Activated CD4-positive, alpha-beta memory T cell treated with anti-CD3 and anti-CD28 coated beads for 36 hours (primary cell): ENCODE measurements at regions of chr17 and their contacts with region 1.

Region 1: DNA sequence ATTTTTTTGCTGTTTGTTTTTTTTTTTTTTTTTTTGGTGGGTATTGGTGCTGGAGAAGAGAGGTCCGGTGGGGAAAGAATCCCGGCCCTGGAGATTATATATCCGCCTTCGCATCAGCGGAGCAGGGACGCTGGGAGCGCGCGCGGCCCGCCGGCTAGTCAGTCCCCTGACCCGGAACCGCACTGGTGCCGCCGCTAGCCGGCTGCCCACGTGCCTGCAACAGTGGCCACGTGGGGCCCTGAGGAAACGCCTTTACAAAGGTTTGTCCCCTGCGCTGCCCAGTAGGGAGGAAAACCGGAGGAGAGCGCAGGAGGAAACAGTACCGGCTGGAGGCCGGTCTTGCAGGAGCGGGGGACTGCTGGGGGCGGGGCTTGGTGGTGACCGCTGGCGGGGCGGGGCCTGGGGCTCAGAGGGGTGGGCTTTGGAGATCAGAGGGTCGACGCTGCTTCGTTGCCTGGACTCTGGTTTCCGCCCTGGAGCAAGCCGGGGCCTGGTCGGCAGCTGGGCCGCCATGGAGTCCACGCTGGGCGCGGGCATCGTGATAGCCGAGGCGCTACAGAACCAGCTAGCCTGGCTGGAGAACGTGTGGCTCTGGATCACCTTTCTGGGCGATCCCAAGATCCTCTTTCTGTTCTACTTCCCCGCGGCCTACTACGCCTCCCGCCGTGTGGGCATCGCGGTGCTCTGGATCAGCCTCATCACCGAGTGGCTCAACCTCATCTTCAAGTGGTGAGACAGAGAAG is at the start of gene G6PC3:
- DNase-seq: peak; percentile 95
- H3K4me3 Mint-ChIP-seq: peak within 1 kb of the TSS; percentile 97
- H3K27ac Mint-ChIP-seq: peak within 1 kb of the TSS; percentile 95
- H3K4me1 Mint-ChIP-seq: peaks cover 30% of the 10 kb centered on the region
- H3K27me3 Mint-ChIP-seq: no peaks in the 10 kb centered on the region
- total RNA-seq, gene G6PC3: 20.7 to 21.9 TPM

Region 2: DNA sequence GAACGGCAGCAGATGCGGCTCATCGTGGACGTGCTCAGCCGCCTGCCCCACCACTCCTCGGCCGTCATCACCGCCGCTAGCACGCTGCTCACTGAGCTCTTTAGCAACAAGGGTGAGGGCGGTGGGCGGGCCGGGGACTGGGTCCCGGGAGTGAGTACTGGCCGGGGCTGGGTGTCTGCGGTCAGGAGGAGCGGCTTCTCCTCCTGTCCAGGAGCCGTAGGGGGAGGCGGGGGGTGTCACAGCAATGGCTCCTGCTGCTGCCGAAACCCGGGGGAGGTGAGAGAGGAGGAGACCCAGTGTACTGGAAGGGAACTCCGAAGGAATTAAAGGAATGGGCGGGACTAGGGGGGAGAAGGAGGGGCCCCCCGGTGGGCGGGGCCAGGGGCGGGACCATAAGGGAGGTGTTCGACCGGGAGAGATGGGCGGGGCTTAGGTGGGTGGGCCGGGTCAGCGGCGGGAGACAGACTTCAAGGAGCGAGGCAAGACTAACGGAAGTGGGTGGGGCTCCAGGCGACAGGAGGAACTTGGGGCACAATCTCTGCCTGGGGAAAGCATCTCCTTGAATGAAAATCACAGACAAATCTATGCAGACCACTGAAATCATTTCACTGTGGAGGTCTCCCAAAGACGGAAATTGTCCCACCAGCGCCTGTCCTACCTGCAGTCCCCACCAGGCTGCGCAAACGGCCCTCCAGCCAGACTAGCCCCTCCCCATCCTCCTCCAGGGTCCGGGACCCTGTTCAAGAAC is 63.9 kb before region 1 on chr17:
- CTCF ChIA-PET with region 1: no interaction called
- POLR2A ChIA-PET with region 1: interaction called, 3 read pairs
- intact Hi-C with region 1: loop called (anchors 2 kb)
- DNase-seq: peak; percentile 100
- H3K4me3 Mint-ChIP-seq: peak overlapping the region; percentile 86
- H3K27ac Mint-ChIP-seq: peak overlapping the region; percentile 3
- H3K4me1 Mint-ChIP-seq: peaks cover 23% of the 10 kb centered on the region
- H3K27me3 Mint-ChIP-seq: peaks cover 6% of the 10 kb centered on the region

Region 3: DNA sequence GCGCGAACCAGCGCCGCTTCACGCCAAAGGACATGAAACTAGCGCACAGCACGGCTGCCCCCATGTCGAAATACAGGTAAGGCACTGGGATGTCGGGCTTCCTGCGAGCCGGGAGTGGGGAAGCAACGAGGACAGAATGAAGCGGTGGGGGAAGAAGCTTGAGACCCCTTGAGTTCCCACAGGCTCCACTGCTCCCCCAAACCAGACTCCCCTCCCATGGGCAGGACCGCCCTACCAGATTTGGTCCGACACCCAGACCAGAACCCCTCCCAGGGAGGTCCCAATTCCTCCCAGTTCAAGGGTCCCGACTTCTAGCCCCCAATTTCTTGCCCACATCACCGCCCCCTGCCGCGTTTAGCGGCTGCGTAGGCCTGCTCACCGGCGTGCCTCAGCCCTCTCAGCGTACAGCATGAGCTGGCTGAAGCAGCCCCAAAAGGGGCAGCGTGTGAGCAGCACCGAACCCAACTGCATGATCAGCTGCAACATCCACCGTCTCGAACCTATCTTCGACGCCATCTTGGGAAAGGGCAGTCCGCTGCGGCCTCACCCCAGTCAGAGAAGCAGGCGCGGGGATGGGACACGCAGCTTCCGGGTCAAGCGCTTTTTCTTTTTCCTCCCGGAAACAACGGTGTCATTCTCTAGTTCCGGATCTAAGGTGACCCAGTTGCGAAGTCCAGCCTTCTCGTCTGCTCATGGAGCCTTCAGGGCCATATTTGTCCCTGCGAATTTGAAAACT is 56.0 kb before region 1 on chr17 and contains the start of gene TMEM101:
- CTCF ChIA-PET with region 1: no interaction called
- POLR2A ChIA-PET with region 1: interaction called, 3 read pairs
- intact Hi-C with region 1: loop called (anchors 2 kb)
- DNase-seq: peak; percentile 92
- H3K4me3 Mint-ChIP-seq: peak within 1 kb of the TSS; percentile 100
- H3K27ac Mint-ChIP-seq: peak within 1 kb of the TSS; percentile 79
- H3K4me1 Mint-ChIP-seq: peaks cover 18% of the 10 kb centered on the region
- H3K27me3 Mint-ChIP-seq: no peaks in the 10 kb centered on the region
- total RNA-seq, gene TMEM101: 27.6 to 28.2 TPM

Region 4: DNA sequence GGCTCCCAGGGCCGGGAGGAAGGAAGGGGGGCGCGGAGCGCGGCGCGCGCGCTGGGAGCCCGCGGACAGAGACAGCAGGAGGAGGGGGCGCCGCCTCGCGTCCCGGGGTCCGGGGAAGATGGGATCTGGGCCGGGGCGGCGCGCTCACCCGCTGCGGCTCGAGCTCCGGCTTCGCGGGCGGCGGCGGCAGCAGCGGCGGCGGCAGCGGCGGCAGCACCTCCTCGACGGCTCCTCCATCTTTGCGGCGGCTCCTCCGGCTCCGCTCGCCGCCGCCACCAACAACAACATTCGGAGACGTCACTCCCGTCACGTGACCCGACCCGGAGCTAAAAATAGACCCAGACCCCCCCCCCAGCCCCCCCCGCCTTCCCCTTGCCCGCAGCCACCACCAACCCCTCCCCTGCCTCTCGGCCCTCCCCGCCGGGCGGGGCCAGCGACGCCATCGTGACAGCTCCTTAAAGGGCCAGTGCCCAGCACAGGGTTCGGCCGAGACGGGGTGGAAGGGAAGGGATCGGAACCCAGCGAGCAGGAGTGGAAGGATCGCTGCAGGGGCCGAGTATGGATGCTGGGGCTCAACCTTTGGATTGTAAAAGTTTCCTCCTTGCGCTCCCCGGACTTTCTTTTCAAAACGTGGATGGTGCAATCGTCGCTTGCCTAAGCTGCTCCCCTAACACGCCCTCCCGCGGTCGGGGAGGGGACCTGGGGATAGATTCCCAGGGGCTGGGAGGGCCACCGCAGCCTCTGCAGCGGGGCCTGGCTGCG is 52.9 kb after region 1 on chr17 and contains the start of gene HDAC5:
- CTCF ChIA-PET with region 1: interaction called, 4 read pairs
- POLR2A ChIA-PET with region 1: interaction called, 5 read pairs
- intact Hi-C with region 1: loop called (anchors 2 kb)
- DNase-seq: peak; percentile 97
- H3K4me3 Mint-ChIP-seq: peak within 1 kb of the TSS; percentile 86
- H3K27ac Mint-ChIP-seq: peak within 1 kb of the TSS; percentile 92
- H3K4me1 Mint-ChIP-seq: peaks cover 25% of the 10 kb centered on the region
- H3K27me3 Mint-ChIP-seq: no peaks in the 10 kb centered on the region
- total RNA-seq, gene HDAC5: 18.0 to 19.0 TPM

Region 5: DNA sequence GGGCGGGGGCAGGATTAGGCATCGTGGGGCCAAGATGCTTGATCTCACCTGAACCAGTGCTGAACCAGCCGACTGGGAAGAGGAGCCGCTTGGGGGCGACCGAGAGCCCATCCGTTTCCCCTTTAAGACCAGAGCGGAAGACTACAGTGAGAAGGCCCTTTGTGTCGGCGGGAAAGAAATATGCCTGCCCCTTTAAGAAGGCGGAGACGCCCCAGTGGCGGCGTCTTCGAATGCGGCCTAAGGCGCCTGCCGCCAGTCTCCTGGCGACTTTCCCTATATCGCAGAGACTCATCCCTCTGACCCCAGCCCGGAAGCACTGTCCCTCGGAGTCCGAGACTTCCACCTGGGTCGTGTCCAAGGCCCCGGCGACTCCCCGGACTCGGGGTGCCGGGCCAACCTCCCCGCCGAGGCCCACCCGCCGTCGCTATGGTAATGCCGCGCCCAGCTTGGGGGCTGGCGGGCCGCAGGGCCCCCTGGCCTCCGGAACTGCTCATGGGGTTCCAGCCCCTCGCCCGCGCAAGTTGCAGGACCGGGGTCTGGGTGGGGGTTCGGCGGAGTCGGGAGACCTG is 71.2 kb after region 1 on chr17 and contains the start of gene HROB:
- CTCF ChIA-PET with region 1: interaction called, 3 read pairs
- POLR2A ChIA-PET with region 1: no interaction called
- intact Hi-C with region 1: loop called (anchors 1 kb)
- DNase-seq: peak; percentile 99
- H3K4me3 Mint-ChIP-seq: peak within 1 kb of the TSS; percentile 87
- H3K27ac Mint-ChIP-seq: peak within 1 kb of the TSS; percentile 89
- H3K4me1 Mint-ChIP-seq: peaks cover 24% of the 10 kb centered on the region
- H3K27me3 Mint-ChIP-seq: peaks cover 4% of the 10 kb centered on the region
- total RNA-seq, gene HROB: 17.9 to 19.8 TPM

Region 6: DNA sequence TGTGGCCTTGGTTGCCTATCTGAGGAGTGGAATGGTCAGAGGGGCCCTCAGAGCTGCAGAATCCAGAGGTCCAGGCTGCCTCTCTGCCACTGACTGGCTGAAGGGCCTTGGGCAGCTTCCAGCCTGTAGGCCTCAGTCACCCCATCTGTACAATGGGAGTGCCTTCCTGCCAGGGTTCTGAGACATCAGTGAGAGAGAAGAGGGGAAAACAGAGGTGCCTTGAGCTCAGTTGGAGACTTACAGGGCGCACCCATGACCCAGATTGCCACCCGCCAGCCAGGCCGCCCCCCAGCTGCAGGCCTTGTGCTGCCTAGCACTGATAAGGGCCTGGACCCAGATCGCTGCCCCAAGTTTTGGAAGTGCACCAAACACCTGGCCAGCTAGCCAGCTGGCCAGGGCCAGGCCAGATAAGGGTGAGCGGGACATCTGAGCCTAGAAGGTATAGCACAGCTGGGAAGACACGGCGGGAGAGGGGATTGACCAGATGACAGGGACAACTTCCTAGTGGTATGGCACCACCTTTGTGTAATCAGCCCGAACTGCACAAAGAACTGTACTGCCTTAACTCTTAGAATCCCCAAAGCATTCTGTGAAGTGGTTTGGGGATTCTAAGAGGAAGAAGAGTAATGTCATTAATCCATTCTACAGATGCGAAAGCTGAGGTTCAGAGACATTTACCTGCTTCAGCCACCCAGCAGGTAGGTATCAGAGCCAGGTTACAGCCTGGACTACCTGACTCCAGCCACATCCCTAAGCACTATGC is 196.0 kb after region 1 on chr17:
- CTCF ChIA-PET with region 1: no interaction called
- POLR2A ChIA-PET with region 1: no interaction called
- intact Hi-C with region 1: no loop called
- DNase-seq: no peak
- H3K4me3 Mint-ChIP-seq: no peak overlapping the region
- H3K27ac Mint-ChIP-seq: no peak overlapping the region
- H3K4me1 Mint-ChIP-seq: no peaks in the 10 kb centered on the region
- H3K27me3 Mint-ChIP-seq: no peaks in the 10 kb centered on the region